ENCODE measurements at regions of chr15 and their contacts with region 1.

Region 1: GRCh38 chr15:101088788-101089583 is 162.9 kb downstream of the CHSY1 start:
- DNase-seq: peak; percentile 82
- ATAC-seq: peak; percentile 87 to 99 (median 98)
- H3K4me3 ChIP-seq: no peak overlapping the region
- H3K4me3 Mint-ChIP-seq: no peak overlapping the region
- H3K27ac ChIP-seq: no peak overlapping the region
- H3K27ac Mint-ChIP-seq: no peak overlapping the region
- H3K4me1 ChIP-seq: peaks cover 3% of the 10 kb centered on the region
- H3K4me1 Mint-ChIP-seq: peaks cover 0 to 7% of the 10 kb centered on the region in 2 donors
- H3K27me3 ChIP-seq: no peaks in the 10 kb centered on the region
- H3K27me3 Mint-ChIP-seq: peaks cover 0 to 3% of the 10 kb centered on the region in 2 donors
- CTCF ChIP-seq: peak; percentile 99

Region 2: DNA sequence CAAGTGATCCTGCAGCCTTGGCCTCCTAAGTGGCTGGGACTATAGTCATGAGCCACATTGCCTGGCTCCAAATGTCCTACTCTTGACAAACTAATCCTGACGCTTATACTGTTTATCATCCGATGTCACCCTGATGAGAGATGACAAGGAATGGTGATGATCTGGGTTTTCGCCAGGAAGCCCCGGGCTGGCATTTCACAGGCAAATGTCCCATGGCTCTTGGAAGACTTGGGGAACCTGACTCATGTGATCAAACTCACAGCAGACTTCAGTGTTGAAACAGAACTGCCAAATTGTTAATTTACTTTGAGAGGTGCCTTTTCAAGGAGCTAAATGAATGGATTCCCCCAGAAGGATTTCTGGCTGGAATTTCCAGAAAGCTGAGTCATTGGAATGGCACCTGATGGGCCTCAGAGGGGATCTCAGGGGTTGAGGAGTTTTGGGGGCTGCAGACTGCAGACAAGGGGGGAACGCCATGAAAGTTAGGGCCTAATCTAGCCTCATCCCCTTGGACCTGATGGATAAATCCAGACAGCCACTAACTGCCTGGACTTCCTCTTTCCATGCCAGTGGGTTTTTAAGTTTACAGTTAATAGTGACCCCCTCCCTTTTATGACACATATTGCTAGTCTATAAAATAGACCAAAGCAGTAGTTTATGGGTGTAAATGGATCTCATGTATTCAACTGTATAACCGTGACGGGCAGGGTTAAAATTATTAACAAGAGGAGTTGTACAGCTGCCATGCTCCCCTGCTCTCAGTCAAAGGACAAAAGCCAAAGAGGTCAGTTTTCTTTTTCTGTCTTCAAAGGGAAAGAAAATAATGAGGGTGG is 16.3 kb after region 1 on chr15:
- intact Hi-C with region 1: no loop called
- DNase-seq: no peak
- ATAC-seq: no peak
- H3K4me3 ChIP-seq: no peak overlapping the region
- H3K4me3 Mint-ChIP-seq: no peak overlapping the region
- H3K27ac ChIP-seq: no peak overlapping the region
- H3K27ac Mint-ChIP-seq: no peak overlapping the region
- H3K4me1 ChIP-seq: no peaks in the 10 kb centered on the region
- H3K4me1 Mint-ChIP-seq: no peaks in the 10 kb centered on the region
- H3K27me3 ChIP-seq: no peaks in the 10 kb centered on the region
- H3K27me3 Mint-ChIP-seq: no peaks in the 10 kb centered on the region
- CTCF ChIP-seq: no peak

Region 3: DNA sequence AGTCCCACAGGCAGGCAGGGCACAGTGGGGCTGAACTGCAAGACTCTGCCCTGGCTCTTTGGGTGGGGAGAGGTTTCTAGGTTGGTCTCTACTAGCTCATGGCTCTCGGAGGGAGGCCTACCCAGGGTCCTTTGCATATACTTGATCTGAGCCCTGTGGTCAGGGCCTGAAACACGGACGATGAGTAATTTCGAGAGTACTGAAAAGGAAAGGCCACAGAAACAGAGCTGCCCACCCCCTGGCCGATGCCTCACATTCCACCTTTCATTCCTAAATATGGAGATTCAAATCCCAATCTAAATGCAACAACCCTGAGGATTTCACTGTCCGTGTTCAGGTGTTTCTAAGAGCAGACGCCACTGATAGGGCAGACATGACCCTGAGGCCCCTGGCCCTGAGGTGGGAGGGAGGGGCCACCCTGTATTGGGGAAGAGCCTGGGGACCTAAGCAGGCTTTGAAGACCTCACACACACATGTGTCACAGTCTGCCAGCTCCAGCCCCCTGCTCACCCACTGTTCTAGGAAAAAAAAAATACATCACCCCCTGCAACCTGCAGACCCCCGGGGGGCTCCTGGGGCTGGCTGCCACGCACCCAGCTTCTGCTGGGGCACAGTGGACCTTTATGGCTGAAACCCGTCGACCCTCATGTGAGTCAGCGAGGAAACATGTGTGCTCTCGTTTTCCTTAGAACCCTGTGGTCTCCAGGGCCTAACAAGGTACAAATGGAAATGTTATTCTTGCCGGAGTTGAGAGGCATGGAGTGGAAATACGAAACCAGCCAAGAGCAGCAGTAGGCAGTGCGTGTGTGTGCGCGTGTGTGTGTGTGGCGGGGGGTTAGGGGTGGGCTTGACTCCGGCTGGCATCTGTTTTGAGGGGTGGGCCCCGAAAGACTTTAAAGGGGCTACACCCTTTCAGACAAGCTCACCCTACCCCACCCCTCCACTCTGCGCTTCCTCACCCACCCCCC is 50.2 kb after region 1 on chr15:
- intact Hi-C with region 1: loop called (anchors 5 kb)
- DNase-seq: no peak
- ATAC-seq: no peak
- H3K4me3 ChIP-seq: no peak overlapping the region
- H3K4me3 Mint-ChIP-seq: no peak overlapping the region
- H3K27ac ChIP-seq: no peak overlapping the region
- H3K27ac Mint-ChIP-seq: peak overlapping the region in 1 of 2 donors; percentile 67
- H3K4me1 ChIP-seq: peaks cover 38% of the 10 kb centered on the region
- H3K4me1 Mint-ChIP-seq: peaks cover 35 to 36% of the 10 kb centered on the region in 2 donors
- H3K27me3 ChIP-seq: no peaks in the 10 kb centered on the region
- H3K27me3 Mint-ChIP-seq: no peaks in the 10 kb centered on the region
- CTCF ChIP-seq: no peak

Region 4: GRCh38 chr15:101258238-101259144 is 169.5 kb after region 1 on chr15:
- intact Hi-C with region 1: loop called (anchors 1 kb)
- DNase-seq: peak; percentile 38 to 84
- ATAC-seq: peak; percentile 78 to 86 (median 84)
- H3K4me3 ChIP-seq: no peak overlapping the region
- H3K4me3 Mint-ChIP-seq: no peak overlapping the region
- H3K27ac ChIP-seq: no peak overlapping the region
- H3K27ac Mint-ChIP-seq: no peak overlapping the region
- H3K4me1 ChIP-seq: peaks cover 2% of the 10 kb centered on the region
- H3K4me1 Mint-ChIP-seq: peaks cover 0 to 6% of the 10 kb centered on the region in 2 donors
- H3K27me3 ChIP-seq: no peaks in the 10 kb centered on the region
- H3K27me3 Mint-ChIP-seq: peaks cover 5 to 18% of the 10 kb centered on the region in 2 donors
- CTCF ChIP-seq: peak; percentile 92

Region 5: GRCh38 chr15:101641166-101641764 is 552.3 kb after region 1 on chr15:
- intact Hi-C with region 1: loop called (anchors 5 kb)
- DNase-seq: peak; percentile 72 to 91
- ATAC-seq: peak; percentile 78 to 83 (median 82)
- H3K4me3 ChIP-seq: no peak overlapping the region
- H3K4me3 Mint-ChIP-seq: peak overlapping the region; percentile 25
- H3K27ac ChIP-seq: peak overlapping the region; percentile 20
- H3K27ac Mint-ChIP-seq: peak overlapping the region; percentile 89 to 93
- H3K4me1 ChIP-seq: no peaks in the 10 kb centered on the region
- H3K4me1 Mint-ChIP-seq: peaks cover 19 to 21% of the 10 kb centered on the region in 2 donors
- H3K27me3 ChIP-seq: no peaks in the 10 kb centered on the region
- H3K27me3 Mint-ChIP-seq: no peaks in the 10 kb centered on the region
- CTCF ChIP-seq: peak; percentile 97